ENCODE measurements at regions of chr3 and their contacts with region 1.

Region 1: GRCh38 chr3:101724329-101725193 is at the start of gene CEP97:
- DNase-seq: peak; percentile 87 to 92 (median 90)
- H3K4me3 ChIP-seq: peak within 1 kb of the TSS; percentile 97 to 99
- H3K4me3 Mint-ChIP-seq: peak within 1 kb of the TSS; percentile 98 to 100 (median 99)
- H3K27ac ChIP-seq: peak within 1 kb of the TSS; percentile 90
- H3K27ac Mint-ChIP-seq: peak within 1 kb of the TSS; percentile 92 to 99 (median 99)
- H3K4me1 ChIP-seq: peaks cover 52% of the 10 kb centered on the region
- H3K4me1 Mint-ChIP-seq: peaks cover 31 to 56% (median 37%) of the 10 kb centered on the region in 4 donors
- H3K27me3 ChIP-seq: no peaks in the 10 kb centered on the region
- H3K27me3 Mint-ChIP-seq: no peaks in the 10 kb centered on the region
- total RNA-seq, gene CEP97: 14.8 to 16.8 TPM

Region 2: GRCh38 chr3:101676765-101677435 is 47.7 kb before region 1 on chr3 and contains the start of gene ZBTB11:
- CTCF ChIA-PET with region 1: interaction called, 7 read pairs
- POLR2A ChIA-PET with region 1: interaction called, 36 read pairs
- intact Hi-C with region 1: loop called (anchors 1 kb)
- DNase-seq: peak; percentile 99 to 100 (median 99)
- H3K4me3 ChIP-seq: peak within 1 kb of the TSS; percentile 78 to 94
- H3K4me3 Mint-ChIP-seq: peak within 1 kb of the TSS; percentile 92 to 99 (median 96)
- H3K27ac ChIP-seq: peak within 1 kb of the TSS; percentile 98
- H3K27ac Mint-ChIP-seq: peak within 1 kb of the TSS; percentile 97 to 99 (median 98)
- H3K4me1 ChIP-seq: peaks cover 44% of the 10 kb centered on the region
- H3K4me1 Mint-ChIP-seq: peaks cover 23 to 73% (median 41%) of the 10 kb centered on the region in 4 donors
- H3K27me3 ChIP-seq: no peaks in the 10 kb centered on the region
- H3K27me3 Mint-ChIP-seq: peaks cover 0 to 2% of the 10 kb centered on the region in 2 donors
- total RNA-seq, gene ZBTB11: 48.9 to 50.8 TPM

Region 3: DNA sequence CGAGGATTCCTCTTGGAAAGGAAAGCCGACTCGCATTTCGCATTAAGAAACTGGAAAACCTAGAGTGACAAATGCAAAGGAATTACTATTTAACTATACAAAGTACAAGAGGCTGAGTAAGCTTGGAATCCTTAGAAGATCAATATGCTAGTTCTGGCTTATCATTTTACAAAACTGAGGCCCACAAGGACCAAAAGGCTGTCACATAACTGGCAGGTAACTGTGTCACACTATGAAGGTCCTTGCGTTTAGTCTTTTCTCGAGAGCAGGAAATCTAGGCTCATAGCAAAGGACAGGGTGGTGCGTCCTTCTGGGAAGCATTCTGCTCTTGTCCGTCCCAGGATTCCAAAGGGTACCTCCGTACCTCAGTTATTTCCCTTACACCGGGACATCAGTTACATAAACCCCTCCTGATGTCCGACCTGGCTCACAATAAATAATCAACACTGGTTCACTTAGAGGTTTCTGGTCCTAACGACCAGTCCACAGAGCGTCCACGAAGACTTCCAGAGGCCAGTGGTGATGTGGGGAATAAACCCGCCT is 38.6 kb before region 1 on chr3:
- CTCF ChIA-PET with region 1: interaction called, 7 read pairs
- POLR2A ChIA-PET with region 1: interaction called, 36 read pairs
- intact Hi-C with region 1: loop called (anchors 1 kb)
- DNase-seq: no peak
- H3K4me3 ChIP-seq: peak overlapping the region; percentile 73 to 97
- H3K4me3 Mint-ChIP-seq: peak overlapping the region; percentile 99 to 100 (median 100)
- H3K27ac ChIP-seq: peak overlapping the region; percentile 90
- H3K27ac Mint-ChIP-seq: peak overlapping the region; percentile 98 to 100 (median 99)
- H3K4me1 ChIP-seq: peaks cover 42% of the 10 kb centered on the region
- H3K4me1 Mint-ChIP-seq: peaks cover 20 to 53% (median 33%) of the 10 kb centered on the region in 4 donors
- H3K27me3 ChIP-seq: no peaks in the 10 kb centered on the region
- H3K27me3 Mint-ChIP-seq: no peaks in the 10 kb centered on the region

Region 4: DNA sequence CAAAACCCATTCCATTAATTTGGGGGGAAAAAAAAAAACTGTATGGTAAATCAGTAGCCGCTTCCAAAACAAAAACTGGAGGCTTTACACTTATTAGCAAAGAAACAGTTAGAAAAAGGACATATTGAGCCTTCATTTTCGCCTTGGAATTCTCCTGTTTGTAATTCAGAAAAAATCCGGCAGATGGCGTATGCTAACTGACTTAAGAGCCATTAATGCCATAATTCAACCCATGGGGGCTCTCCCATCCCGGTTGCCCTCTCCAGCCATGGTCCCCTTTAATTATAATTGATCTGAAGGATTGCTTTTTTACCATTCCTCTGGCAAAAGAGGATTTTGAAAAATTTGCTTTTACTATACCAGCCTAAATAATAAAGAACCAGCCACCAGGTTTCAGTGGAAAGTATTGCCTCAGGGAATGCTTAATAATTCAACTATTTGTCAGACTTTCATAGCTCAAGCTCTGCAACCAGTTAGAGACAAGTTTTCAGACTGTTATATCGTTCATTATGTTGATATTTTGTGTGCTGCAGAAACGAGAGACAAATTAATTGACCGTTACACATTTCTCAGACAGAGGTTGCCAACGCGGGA is 28.7 kb before region 1 on chr3:
- CTCF ChIA-PET with region 1: interaction called, 4 read pairs
- POLR2A ChIA-PET with region 1: no interaction called
- intact Hi-C with region 1: loop called (anchors 2 kb)
- DNase-seq: peak; percentile 51 to 67 (median 58)
- H3K4me3 ChIP-seq: no peak overlapping the region
- H3K4me3 Mint-ChIP-seq: no peak overlapping the region
- H3K27ac ChIP-seq: no peak overlapping the region
- H3K27ac Mint-ChIP-seq: peak overlapping the region in 2 of 7 donors; percentile 74 to 77
- H3K4me1 ChIP-seq: peaks cover 3% of the 10 kb centered on the region
- H3K4me1 Mint-ChIP-seq: peaks cover 0 to 2% (median 1%) of the 10 kb centered on the region in 4 donors
- H3K27me3 ChIP-seq: no peaks in the 10 kb centered on the region
- H3K27me3 Mint-ChIP-seq: no peaks in the 10 kb centered on the region

Measured in CD4-positive, alpha-beta memory T cell (primary cell).